CD8-positive, alpha-beta T cell (primary cell): ENCODE measurements at regions of chr11 and their contacts with region 1.

Region 1: GRCh38 chr11:79708300-79708932 is 267.6 kb upstream of the TENM4 start:
- DNase-seq: no peak
- ATAC-seq: no peak
- H3K4me3 ChIP-seq: no peak overlapping the region
- H3K4me3 Mint-ChIP-seq: no peak overlapping the region
- H3K27ac ChIP-seq: no peak overlapping the region
- H3K27ac Mint-ChIP-seq: no peak overlapping the region
- H3K4me1 ChIP-seq: no peaks in the 10 kb centered on the region
- H3K4me1 Mint-ChIP-seq: no peaks in the 10 kb centered on the region
- H3K27me3 ChIP-seq: no peaks in the 10 kb centered on the region
- H3K27me3 Mint-ChIP-seq: no peaks in the 10 kb centered on the region
- CTCF ChIP-seq: no peak

Region 2: GRCh38 chr11:81159900-81160299 is 1451.5 kb after region 1 on chr11:
- CTCF ChIA-PET with region 1: no interaction called
- POLR2A ChIA-PET with region 1: no interaction called
- intact Hi-C with region 1: loop called in 1 of 2 experiments (anchors 10 kb)
- DNase-seq: no peak
- ATAC-seq: no peak
- H3K4me3 ChIP-seq: no peak overlapping the region
- H3K4me3 Mint-ChIP-seq: no peak overlapping the region
- H3K27ac ChIP-seq: no peak overlapping the region
- H3K27ac Mint-ChIP-seq: no peak overlapping the region
- H3K4me1 ChIP-seq: no peaks in the 10 kb centered on the region
- H3K4me1 Mint-ChIP-seq: no peaks in the 10 kb centered on the region
- H3K27me3 ChIP-seq: no peaks in the 10 kb centered on the region
- H3K27me3 Mint-ChIP-seq: no peaks in the 10 kb centered on the region
- CTCF ChIP-seq: no peak